Posterior vena cava (tissue), 2 donors: ENCODE measurements at regions of chr3 and their contacts with region 1.

Region 1: GRCh38 chr3:138915503-138916498 is 31.1 kb downstream of the FOXL2 start:
- DNase-seq: peak; percentile 98

Region 2: GRCh38 chr3:138594150-138594934 is 321.5 kb before region 1 on chr3 and contains the start of gene CEP70:
- intact Hi-C with region 1: loop called in 1 of 2 experiments (anchors 2 kb)
- DNase-seq: peak; percentile 97
- total RNA-seq, gene CEP70: 37.0 to 52.8 TPM

Region 3: GRCh38 chr3:138608322-138609135 is 307.3 kb before region 1 on chr3 and contains the start of gene FAIM:
- intact Hi-C with region 1: loop called in 1 of 2 experiments (anchors 1 kb)
- DNase-seq: peak; percentile 91
- total RNA-seq, gene FAIM: 8.0 to 11.9 TPM

Region 4: DNA sequence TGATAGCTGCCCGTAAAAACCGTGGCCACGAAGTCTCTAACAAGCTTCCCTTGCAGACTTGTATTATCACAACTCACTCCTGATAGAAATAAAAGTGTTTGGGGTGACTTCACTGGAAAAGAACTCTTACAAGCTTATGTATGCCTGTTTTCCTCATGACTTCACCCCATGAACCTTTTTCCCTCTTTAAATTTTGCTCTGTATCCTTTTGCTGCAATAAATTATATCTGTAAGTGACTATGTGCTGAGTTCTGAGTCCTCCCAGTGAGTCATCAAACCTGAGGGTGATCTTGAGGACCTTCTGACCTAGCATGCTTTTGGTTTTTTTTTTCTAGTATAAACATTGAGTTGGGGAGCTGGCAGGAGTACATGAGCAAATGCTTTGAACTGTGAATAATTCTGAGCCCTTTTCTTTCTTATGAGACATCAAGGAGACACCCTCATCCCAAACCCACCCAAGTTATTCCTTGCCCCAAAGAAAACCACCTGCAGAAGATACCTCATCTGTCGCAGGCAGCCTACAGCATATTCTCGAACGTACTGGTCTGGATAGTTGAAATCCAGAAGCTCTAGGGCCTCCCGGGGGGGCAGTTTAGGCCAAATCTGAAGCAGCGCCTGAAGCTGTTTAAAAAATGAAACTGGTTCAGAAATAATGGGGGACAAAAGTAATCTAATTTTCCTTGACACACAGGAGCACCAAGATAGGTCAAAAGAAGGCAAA is 221.4 kb before region 1 on chr3:
- intact Hi-C with region 1: loop called in 1 of 2 experiments (anchors 5 kb)
- DNase-seq: no peak